Activated CD4-positive, alpha-beta memory T cell treated with anti-CD3 and anti-CD28 coated beads, Interleukin-2, amount 10 ng/mL, durations not matched to agents 7 days and 5 days (primary cell): ENCODE measurements at regions of chr7 and their contacts with region 1.

Region 1: DNA sequence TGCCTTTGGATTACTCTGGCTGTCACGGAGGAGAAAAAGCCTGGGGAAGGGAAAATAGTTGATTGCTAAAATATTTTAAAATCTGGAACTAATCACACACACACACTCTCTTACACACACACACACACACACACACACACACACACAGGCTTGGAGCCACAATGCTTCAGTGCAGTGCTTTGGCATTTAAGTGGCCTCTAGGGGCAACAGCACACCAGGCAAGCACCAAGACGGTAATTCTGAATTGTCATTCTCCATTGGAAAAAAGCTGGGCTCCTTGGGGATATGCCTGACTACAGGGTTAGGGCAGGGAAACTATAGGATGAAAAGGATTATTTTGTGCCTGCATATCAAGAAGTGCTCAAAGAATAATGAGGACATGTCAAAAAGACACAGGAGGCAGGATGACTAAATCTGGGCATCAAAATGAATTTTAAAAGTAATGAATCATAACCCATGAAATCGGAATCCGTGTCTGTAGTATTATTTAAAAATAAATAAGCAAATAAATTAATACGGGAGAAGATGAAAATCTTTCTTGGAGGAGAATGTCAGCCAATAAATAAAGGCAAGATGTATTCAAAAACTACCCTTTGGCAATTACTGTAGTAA is 30.4 kb upstream of the DDC start:
- DNase-seq: peak; percentile 39
- H3K4me3 Mint-ChIP-seq: no peak overlapping the region
- H3K27ac Mint-ChIP-seq: peak overlapping the region; percentile 85
- H3K4me1 Mint-ChIP-seq: peaks cover 45% of the 10 kb centered on the region
- H3K27me3 Mint-ChIP-seq: peaks cover 4% of the 10 kb centered on the region

Region 2: GRCh38 chr7:50610521-50611277 is 15.1 kb after region 1 on chr7:
- CTCF ChIA-PET with region 1: interaction called, 15 read pairs
- POLR2A ChIA-PET with region 1: interaction called, 15 read pairs
- DNase-seq: peak; percentile 78
- H3K4me3 Mint-ChIP-seq: no peak overlapping the region
- H3K27ac Mint-ChIP-seq: peak overlapping the region; percentile 24
- H3K4me1 Mint-ChIP-seq: peaks cover 48% of the 10 kb centered on the region
- H3K27me3 Mint-ChIP-seq: peaks cover 2% of the 10 kb centered on the region